Activated CD4-positive, alpha-beta memory T cell treated with anti-CD3 and anti-CD28 coated beads, Interleukin-2, amount 10 ng/mL, durations not matched to agents 7 days and 5 days (primary cell): ENCODE measurements at regions of chr6 and their contacts with region 1.

Region 1: DNA sequence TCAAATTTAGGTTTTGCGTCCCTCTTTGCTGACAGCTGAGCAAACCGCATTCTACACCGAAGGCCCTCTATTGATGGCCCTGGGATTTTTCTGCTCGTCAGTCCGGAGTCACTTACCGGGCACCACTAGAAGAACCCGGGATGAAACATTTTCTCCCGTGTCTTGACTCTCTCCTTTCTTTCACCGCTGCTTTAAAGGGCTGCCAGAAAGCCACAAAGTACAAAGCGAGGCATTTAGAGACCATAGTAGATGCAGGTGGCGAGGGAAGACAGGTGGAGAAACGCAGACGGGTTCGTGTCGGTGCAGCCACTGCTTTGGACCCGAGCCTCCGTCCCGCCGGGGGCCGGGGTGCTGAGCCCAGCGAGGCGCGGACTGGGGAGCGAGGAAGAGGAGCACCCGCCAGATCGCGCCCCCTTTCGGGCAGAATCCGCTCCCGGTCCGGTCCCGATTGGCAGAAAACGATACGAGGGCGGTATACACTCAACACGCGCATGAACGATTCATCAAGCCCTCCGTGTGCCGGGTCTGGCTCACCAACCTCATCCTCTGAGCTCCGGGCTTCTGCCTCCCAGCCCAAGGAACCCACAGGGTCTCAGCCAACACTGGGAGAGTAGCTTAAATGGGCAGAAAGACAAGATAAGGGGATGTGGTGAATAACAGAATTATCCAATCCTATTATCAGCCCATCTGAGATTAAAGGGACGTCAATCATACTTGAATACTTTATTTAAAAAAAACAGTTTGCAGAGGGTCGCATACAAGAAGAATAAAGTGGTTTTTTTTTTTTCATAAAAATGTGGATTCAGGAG is 84.9 kb downstream of the TRIM27 start:
- DNase-seq: peak; percentile 78
- H3K4me3 Mint-ChIP-seq: peak overlapping the region; percentile 79
- H3K27ac Mint-ChIP-seq: peak overlapping the region; percentile 48
- H3K4me1 Mint-ChIP-seq: peaks cover 23% of the 10 kb centered on the region
- H3K27me3 Mint-ChIP-seq: peaks cover 38% of the 10 kb centered on the region

Region 2: GRCh38 chr6:28683944-28684538 is 154.8 kb before region 1 on chr6:
- CTCF ChIA-PET with region 1: no interaction called
- POLR2A ChIA-PET with region 1: no interaction called
- DNase-seq: peak; percentile 18
- H3K4me3 Mint-ChIP-seq: no peak overlapping the region
- H3K27ac Mint-ChIP-seq: no peak overlapping the region
- H3K4me1 Mint-ChIP-seq: peaks cover 25% of the 10 kb centered on the region
- H3K27me3 Mint-ChIP-seq: peaks cover 63% of the 10 kb centered on the region

Region 3: GRCh38 chr6:28824793-28825731 is 13.8 kb before region 1 on chr6:
- CTCF ChIA-PET with region 1: interaction called, 10 read pairs
- POLR2A ChIA-PET with region 1: no interaction called
- DNase-seq: no peak
- H3K4me3 Mint-ChIP-seq: no peak overlapping the region
- H3K27ac Mint-ChIP-seq: no peak overlapping the region
- H3K4me1 Mint-ChIP-seq: peaks cover 7% of the 10 kb centered on the region
- H3K27me3 Mint-ChIP-seq: peaks cover 65% of the 10 kb centered on the region

Region 4: GRCh38 chr6:28880894-28881780 is 42.3 kb after region 1 on chr6:
- CTCF ChIA-PET with region 1: interaction called, 14 read pairs
- POLR2A ChIA-PET with region 1: interaction called, 16 read pairs
- DNase-seq: peak; percentile 57
- H3K4me3 Mint-ChIP-seq: peak overlapping the region; percentile 53
- H3K27ac Mint-ChIP-seq: peak overlapping the region; percentile 29
- H3K4me1 Mint-ChIP-seq: peaks cover 35% of the 10 kb centered on the region
- H3K27me3 Mint-ChIP-seq: peaks cover 43% of the 10 kb centered on the region

Region 5: GRCh38 chr6:28923318-28924102 is 84.7 kb after region 1 on chr6 and contains the start of gene TRIM27:
- CTCF ChIA-PET with region 1: interaction called, 11 read pairs
- POLR2A ChIA-PET with region 1: interaction called, 26 read pairs
- DNase-seq: peak; percentile 84
- H3K4me3 Mint-ChIP-seq: peak within 1 kb of the TSS; percentile 77
- H3K27ac Mint-ChIP-seq: peak within 1 kb of the TSS; percentile 94
- H3K4me1 Mint-ChIP-seq: peaks cover 39% of the 10 kb centered on the region
- H3K27me3 Mint-ChIP-seq: no peaks in the 10 kb centered on the region
- total RNA-seq, gene TRIM27: 56.8 to 58.0 TPM

Region 6: GRCh38 chr6:28981833-28982475 is 143.1 kb after region 1 on chr6:
- CTCF ChIA-PET with region 1: interaction called, 46 read pairs
- POLR2A ChIA-PET with region 1: no interaction called
- DNase-seq: peak; percentile 73
- H3K4me3 Mint-ChIP-seq: peak overlapping the region; percentile 86
- H3K27ac Mint-ChIP-seq: peak overlapping the region; percentile 77
- H3K4me1 Mint-ChIP-seq: peaks cover 56% of the 10 kb centered on the region
- H3K27me3 Mint-ChIP-seq: peaks cover 45% of the 10 kb centered on the region

Region 7: GRCh38 chr6:29016559-29017427 is 178.0 kb after region 1 on chr6:
- CTCF ChIA-PET with region 1: interaction called, 87 read pairs
- POLR2A ChIA-PET with region 1: interaction called, 25 read pairs
- DNase-seq: peak; percentile 86
- H3K4me3 Mint-ChIP-seq: peak overlapping the region; percentile 81
- H3K27ac Mint-ChIP-seq: peak overlapping the region; percentile 80
- H3K4me1 Mint-ChIP-seq: peaks cover 18% of the 10 kb centered on the region
- H3K27me3 Mint-ChIP-seq: peaks cover 5% of the 10 kb centered on the region